ENCODE measurements at regions of chr7 and their contacts with region 1.

Region 1: GRCh38 chr7:77351539-77352004 is 64.6 kb downstream of the GSAP start:
- DNase-seq: peak; percentile 14 to 69 (median 57)
- ATAC-seq: peak; percentile 90
- H3K4me3 ChIP-seq: peak overlapping the region; percentile 6
- H3K4me3 Mint-ChIP-seq: peak overlapping the region; percentile 70 to 96 (median 85)
- H3K27ac ChIP-seq: peak overlapping the region; percentile 42
- H3K27ac Mint-ChIP-seq: peak overlapping the region; percentile 84 to 96 (median 90)
- H3K4me1 ChIP-seq: peaks cover 55 to 59% of the 10 kb centered on the region in 2 donors
- H3K4me1 Mint-ChIP-seq: peaks cover 47 to 82% (median 79%) of the 10 kb centered on the region in 7 donors
- H3K27me3 ChIP-seq: no peaks in the 10 kb centered on the region
- H3K27me3 Mint-ChIP-seq: peaks cover 0 to 11% (median 0%) of the 10 kb centered on the region in 5 donors

Region 2: DNA sequence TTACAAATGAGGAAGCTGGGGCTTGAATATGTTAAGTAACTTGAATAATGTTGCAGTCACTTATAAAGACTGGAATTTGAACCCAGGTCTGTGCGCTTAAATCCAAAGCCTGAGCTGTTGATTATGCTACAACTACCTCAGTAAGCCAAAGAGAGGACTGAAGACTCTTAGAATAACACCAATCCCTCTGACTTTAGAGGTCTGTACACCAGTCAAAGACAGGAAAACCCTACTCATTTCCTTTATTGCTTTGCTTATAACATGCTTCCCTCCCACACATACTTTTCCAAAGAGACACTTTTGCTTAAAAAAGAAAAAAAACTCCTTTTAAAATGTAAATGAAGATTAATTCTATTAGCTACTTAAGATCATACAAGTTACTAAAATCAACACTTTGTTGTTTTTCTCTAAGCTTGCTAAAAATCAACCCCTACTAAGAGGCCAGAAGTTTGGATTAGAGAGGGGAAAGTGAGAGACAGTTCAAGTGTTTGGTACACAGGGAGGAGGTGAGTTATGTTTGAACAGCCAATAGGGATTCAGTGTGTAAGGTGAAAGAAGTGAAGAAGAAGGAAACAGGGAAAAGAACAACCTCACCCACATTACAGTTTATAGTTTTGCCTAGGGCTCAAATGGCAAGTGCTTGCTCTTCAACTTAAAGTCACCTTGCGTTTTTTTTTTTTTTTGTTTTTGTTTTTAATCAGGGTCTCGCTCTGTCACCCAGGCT is 1228.9 kb before region 1 on chr7:
- CTCF ChIA-PET with region 1: no interaction called
- POLR2A ChIA-PET with region 1: no interaction called
- intact Hi-C with region 1: no loop called
- DNase-seq: no peak
- ATAC-seq: no peak
- H3K4me3 ChIP-seq: no peak overlapping the region
- H3K4me3 Mint-ChIP-seq: no peak overlapping the region
- H3K27ac ChIP-seq: no peak overlapping the region
- H3K27ac Mint-ChIP-seq: peak overlapping the region in 3 of 9 donors; percentile 3 to 38 (median 26)
- H3K4me1 ChIP-seq: no peaks in the 10 kb centered on the region
- H3K4me1 Mint-ChIP-seq: peaks cover 9 to 26% (median 19%) of the 10 kb centered on the region in 7 donors
- H3K27me3 ChIP-seq: no peaks in the 10 kb centered on the region
- H3K27me3 Mint-ChIP-seq: no peaks in the 10 kb centered on the region

Region 3: DNA sequence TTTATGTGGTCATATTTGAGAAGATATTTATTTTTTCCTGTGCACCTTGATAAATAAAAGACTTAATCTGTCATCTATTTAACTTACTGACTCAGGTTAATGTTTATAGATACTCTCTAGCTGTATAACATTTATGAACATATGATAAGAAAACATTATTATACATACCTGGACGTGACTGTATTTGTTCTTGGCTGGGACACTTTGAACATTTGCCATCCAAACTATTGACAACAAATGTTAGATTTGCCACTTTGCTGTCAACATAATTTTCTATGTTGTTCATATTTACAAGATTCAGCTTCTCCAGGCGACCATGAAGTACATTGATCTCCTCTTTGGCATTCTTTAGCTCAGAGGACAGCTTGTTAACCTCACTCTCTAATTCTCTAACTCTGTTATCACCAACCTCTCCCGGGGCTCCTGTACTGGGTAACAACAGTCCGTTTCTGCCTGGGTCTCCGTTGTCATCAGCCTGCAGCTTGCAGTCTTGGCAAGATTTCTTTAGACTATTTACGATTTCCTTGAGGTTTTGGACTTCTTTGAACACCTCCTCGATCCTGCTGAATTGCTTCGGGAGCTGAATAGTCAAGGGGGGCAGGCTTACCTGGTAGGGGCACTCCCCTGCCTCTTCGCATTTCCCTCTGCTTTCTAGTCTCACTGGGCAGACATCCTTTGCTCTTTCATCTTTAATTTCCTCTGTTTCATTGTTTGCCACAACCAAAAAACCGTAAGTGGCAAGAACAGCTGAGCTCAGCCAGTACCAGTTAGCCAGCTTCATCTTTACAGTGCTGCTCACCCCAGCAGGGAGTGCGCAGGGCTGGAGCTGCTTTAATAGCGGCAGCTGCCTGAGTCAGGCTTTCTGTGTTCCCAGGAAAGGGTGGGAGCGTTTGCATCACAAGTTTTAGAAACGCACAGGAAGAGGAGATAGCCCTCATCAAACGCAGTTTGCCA is 152.3 kb before region 1 on chr7 and contains the start of gene FGL2:
- CTCF ChIA-PET with region 1: no interaction called
- POLR2A ChIA-PET with region 1: no interaction called
- intact Hi-C with region 1: loop called in 1 of 2 experiments (anchors 5 kb)
- DNase-seq: peak in 6 of 9 donors; percentile 13 to 36 (median 33)
- ATAC-seq: peak; percentile 88
- H3K4me3 ChIP-seq: peak within 1 kb of the TSS; percentile 50
- H3K4me3 Mint-ChIP-seq: peak within 1 kb of the TSS; percentile 82 to 90 (median 84)
- H3K27ac ChIP-seq: peak within 1 kb of the TSS; percentile 58
- H3K27ac Mint-ChIP-seq: peak within 1 kb of the TSS; percentile 49 to 84 (median 81)
- H3K4me1 ChIP-seq: peaks cover 0 to 20% of the 10 kb centered on the region in 2 donors
- H3K4me1 Mint-ChIP-seq: peaks cover 18 to 49% (median 34%) of the 10 kb centered on the region in 7 donors
- H3K27me3 ChIP-seq: no peaks in the 10 kb centered on the region
- H3K27me3 Mint-ChIP-seq: no peaks in the 10 kb centered on the region
- total RNA-seq, gene FGL2: 2.8 to 129 (median 3.2) TPM

Region 4: GRCh38 chr7:77331938-77332695 is 19.5 kb before region 1 on chr7:
- CTCF ChIA-PET with region 1: interaction called, 6 read pairs
- POLR2A ChIA-PET with region 1: interaction called, 8 read pairs
- intact Hi-C with region 1: loop called in 1 of 2 experiments (anchors 2 kb)
- DNase-seq: peak in 8 of 9 donors; percentile 15 to 49 (median 38)
- ATAC-seq: peak; percentile 78
- H3K4me3 ChIP-seq: no peak overlapping the region
- H3K4me3 Mint-ChIP-seq: peak overlapping the region in 2 of 10 donors; percentile 13 to 37
- H3K27ac ChIP-seq: no peak overlapping the region
- H3K27ac Mint-ChIP-seq: peak overlapping the region in 2 of 9 donors; percentile 55 to 74
- H3K4me1 ChIP-seq: peaks cover 18 to 34% of the 10 kb centered on the region in 2 donors
- H3K4me1 Mint-ChIP-seq: peaks cover 28 to 55% (median 42%) of the 10 kb centered on the region in 7 donors
- H3K27me3 ChIP-seq: no peaks in the 10 kb centered on the region
- H3K27me3 Mint-ChIP-seq: no peaks in the 10 kb centered on the region

Region 5: GRCh38 chr7:77339726-77340125 is 11.8 kb before region 1 on chr7:
- CTCF ChIA-PET with region 1: interaction called, 6 read pairs
- POLR2A ChIA-PET with region 1: interaction called, 3 read pairs
- intact Hi-C with region 1: loop called in 1 of 2 experiments (anchors 2 kb)
- DNase-seq: no peak
- ATAC-seq: no peak
- H3K4me3 ChIP-seq: no peak overlapping the region
- H3K4me3 Mint-ChIP-seq: no peak overlapping the region
- H3K27ac ChIP-seq: no peak overlapping the region
- H3K27ac Mint-ChIP-seq: peak overlapping the region in 2 of 9 donors; percentile 19 to 22
- H3K4me1 ChIP-seq: peaks cover 6 to 9% of the 10 kb centered on the region in 2 donors
- H3K4me1 Mint-ChIP-seq: peaks cover 14 to 43% (median 26%) of the 10 kb centered on the region in 7 donors
- H3K27me3 ChIP-seq: no peaks in the 10 kb centered on the region
- H3K27me3 Mint-ChIP-seq: peaks cover 0 to 2% (median 0%) of the 10 kb centered on the region in 5 donors

Region 6: DNA sequence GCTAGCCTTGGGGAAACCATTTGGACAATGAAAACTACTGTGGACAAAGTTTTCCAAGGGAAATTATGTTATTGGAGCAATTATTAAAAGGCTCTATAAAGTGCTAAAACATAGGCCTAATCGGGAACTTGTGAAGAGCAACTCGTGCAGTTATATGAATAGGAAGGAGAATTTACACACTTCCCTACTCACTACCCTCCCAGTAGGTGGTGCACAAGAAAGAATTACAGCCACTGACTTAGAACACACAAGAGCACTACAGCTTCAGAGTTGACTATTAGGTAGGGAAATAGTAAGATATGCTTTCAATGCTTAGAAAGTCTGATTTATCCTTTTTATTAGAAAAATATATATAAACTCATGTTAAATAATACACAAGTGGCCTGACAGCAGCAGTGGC is 17.4 kb after region 1 on chr7:
- CTCF ChIA-PET with region 1: interaction called, 3 read pairs
- POLR2A ChIA-PET with region 1: interaction called, 4 read pairs
- intact Hi-C with region 1: loop called in 1 of 2 experiments (anchors 1 kb)
- DNase-seq: no peak
- ATAC-seq: no peak
- H3K4me3 ChIP-seq: no peak overlapping the region
- H3K4me3 Mint-ChIP-seq: no peak overlapping the region
- H3K27ac ChIP-seq: no peak overlapping the region
- H3K27ac Mint-ChIP-seq: no peak overlapping the region
- H3K4me1 ChIP-seq: no peaks in the 10 kb centered on the region
- H3K4me1 Mint-ChIP-seq: peaks cover 0 to 7% (median 3%) of the 10 kb centered on the region in 7 donors
- H3K27me3 ChIP-seq: no peaks in the 10 kb centered on the region
- H3K27me3 Mint-ChIP-seq: peaks cover 0 to 7% (median 0%) of the 10 kb centered on the region in 5 donors

Region 7: DNA sequence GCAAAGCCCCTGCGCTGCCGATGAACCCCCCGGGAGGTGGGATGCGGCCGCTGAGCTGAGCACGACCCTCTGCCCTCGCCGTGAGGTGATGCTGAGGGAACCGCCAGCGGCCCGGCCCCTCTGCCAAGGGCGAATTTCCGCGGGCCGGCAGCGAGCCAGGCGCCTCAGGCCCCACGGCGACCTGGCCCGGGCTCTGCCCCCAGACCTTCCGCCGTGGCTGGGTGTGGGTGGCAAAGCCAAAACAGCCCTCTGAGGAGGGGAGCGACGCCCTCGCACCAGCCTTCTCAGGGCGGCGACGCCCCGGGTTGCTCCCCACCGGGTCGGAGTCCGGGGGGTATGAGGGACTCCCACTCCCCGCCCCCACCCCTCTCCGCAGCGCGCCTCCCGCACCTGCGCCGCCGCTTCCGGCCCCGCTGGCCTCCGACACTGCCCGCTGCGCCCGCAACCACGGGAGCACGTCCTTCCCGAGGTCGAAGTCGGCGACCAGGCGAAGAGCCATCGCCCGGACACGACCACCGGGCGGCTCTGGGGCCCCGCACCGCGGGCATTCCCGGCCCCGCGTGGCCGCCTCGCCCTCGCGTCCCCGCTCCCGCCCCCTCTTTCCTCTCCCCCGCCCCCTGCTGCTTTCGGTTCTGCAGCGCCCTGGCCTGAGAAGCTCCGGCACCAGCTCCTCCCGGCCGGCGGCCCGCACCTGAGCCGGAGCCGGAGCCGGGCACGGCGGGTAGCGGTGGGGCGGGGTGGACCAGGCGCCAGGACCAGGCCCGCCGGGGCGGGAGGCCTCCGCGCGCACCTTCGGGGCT is 64.5 kb after region 1 on chr7 and contains the start of gene GSAP:
- CTCF ChIA-PET with region 1: interaction called, 4 read pairs
- POLR2A ChIA-PET with region 1: interaction called, 26 read pairs
- intact Hi-C with region 1: loop called (anchors 1 kb)
- DNase-seq: peak; percentile 36 to 59 (median 47)
- ATAC-seq: peak; percentile 83
- H3K4me3 ChIP-seq: peak within 1 kb of the TSS; percentile 75
- H3K4me3 Mint-ChIP-seq: peak within 1 kb of the TSS; percentile 67 to 87 (median 83)
- H3K27ac ChIP-seq: peak within 1 kb of the TSS; percentile 71
- H3K27ac Mint-ChIP-seq: peak within 1 kb of the TSS; percentile 56 to 89 (median 86)
- H3K4me1 ChIP-seq: peaks cover 7 to 8% of the 10 kb centered on the region in 2 donors
- H3K4me1 Mint-ChIP-seq: peaks cover 25 to 56% (median 49%) of the 10 kb centered on the region in 7 donors
- H3K27me3 ChIP-seq: no peaks in the 10 kb centered on the region
- H3K27me3 Mint-ChIP-seq: peaks cover 0 to 25% (median 0%) of the 10 kb centered on the region in 5 donors
- total RNA-seq, gene GSAP: 14.9 to 59.8 (median 29.2) TPM

Measured in naive thymus-derived CD4-positive, alpha-beta T cell (primary cell).